Head of caudate nucleus (tissue), 42 donors: ENCODE measurements at regions of chr5 and their contacts with region 1.

Region 1: GRCh38 chr5:137498736-137499505 is at the start of gene SPOCK1:
- DNase-seq: peak; percentile 42 to 92 (median 81)

Region 2: DNA sequence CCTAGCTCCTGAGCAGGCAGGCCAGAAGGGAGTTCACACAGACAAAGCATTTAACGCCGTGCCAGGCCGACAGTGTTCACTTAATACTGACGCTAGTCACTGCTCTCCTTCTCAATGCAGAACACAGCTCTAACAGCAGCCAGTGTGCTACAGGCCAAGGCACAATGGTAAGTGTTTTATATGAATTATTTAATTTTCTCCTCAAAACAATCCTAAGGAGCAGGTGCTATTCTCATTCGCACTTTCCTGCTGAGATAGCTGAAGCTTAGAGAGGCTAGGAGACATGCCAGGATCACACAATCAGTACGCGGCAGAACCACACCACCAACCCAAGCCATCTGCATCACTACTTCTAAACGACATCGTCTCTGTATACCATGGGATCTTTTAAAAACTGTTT is 170.5 kb before region 1 on chr5:
- intact Hi-C with region 1: loop called (anchors 5 kb)
- DNase-seq: no peak

Region 3: GRCh38 chr5:137344723-137345322 is 154.1 kb before region 1 on chr5:
- intact Hi-C with region 1: loop called (anchors 5 kb)
- DNase-seq: peak in 38 of 42 donors; percentile 14 to 91 (median 66)